CD4-positive, alpha-beta memory T cell (primary cell): ENCODE measurements at regions of chr13 and their contacts with region 1.

Region 1: GRCh38 chr13:97344265-97345175 is 89.4 kb upstream of the RAP2A start:
- DNase-seq: peak in 4 of 5 donors; percentile 38 to 46 (median 44)
- H3K4me3 ChIP-seq: no peak overlapping the region
- H3K4me3 Mint-ChIP-seq: no peak overlapping the region
- H3K27ac ChIP-seq: no peak overlapping the region
- H3K27ac Mint-ChIP-seq: no peak overlapping the region
- H3K4me1 ChIP-seq: peaks cover 10% of the 10 kb centered on the region
- H3K4me1 Mint-ChIP-seq: peaks cover 6 to 8% (median 7%) of the 10 kb centered on the region in 4 donors
- H3K27me3 ChIP-seq: no peaks in the 10 kb centered on the region
- H3K27me3 Mint-ChIP-seq: no peaks in the 10 kb centered on the region

Region 2: GRCh38 chr13:97359181-97360057 is 14.9 kb after region 1 on chr13:
- CTCF ChIA-PET with region 1: interaction called, 19 read pairs
- POLR2A ChIA-PET with region 1: no interaction called
- intact Hi-C with region 1: loop called (anchors 1 kb)
- DNase-seq: peak; percentile 50 to 62 (median 56)
- H3K4me3 ChIP-seq: no peak overlapping the region
- H3K4me3 Mint-ChIP-seq: no peak overlapping the region
- H3K27ac ChIP-seq: no peak overlapping the region
- H3K27ac Mint-ChIP-seq: peak overlapping the region in 2 of 7 donors; percentile 26 to 43
- H3K4me1 ChIP-seq: no peaks in the 10 kb centered on the region
- H3K4me1 Mint-ChIP-seq: peaks cover 3 to 6% (median 4%) of the 10 kb centered on the region in 4 donors
- H3K27me3 ChIP-seq: no peaks in the 10 kb centered on the region
- H3K27me3 Mint-ChIP-seq: no peaks in the 10 kb centered on the region